ENCODE measurements at regions of chr6 and their contacts with region 1.

Region 1: DNA sequence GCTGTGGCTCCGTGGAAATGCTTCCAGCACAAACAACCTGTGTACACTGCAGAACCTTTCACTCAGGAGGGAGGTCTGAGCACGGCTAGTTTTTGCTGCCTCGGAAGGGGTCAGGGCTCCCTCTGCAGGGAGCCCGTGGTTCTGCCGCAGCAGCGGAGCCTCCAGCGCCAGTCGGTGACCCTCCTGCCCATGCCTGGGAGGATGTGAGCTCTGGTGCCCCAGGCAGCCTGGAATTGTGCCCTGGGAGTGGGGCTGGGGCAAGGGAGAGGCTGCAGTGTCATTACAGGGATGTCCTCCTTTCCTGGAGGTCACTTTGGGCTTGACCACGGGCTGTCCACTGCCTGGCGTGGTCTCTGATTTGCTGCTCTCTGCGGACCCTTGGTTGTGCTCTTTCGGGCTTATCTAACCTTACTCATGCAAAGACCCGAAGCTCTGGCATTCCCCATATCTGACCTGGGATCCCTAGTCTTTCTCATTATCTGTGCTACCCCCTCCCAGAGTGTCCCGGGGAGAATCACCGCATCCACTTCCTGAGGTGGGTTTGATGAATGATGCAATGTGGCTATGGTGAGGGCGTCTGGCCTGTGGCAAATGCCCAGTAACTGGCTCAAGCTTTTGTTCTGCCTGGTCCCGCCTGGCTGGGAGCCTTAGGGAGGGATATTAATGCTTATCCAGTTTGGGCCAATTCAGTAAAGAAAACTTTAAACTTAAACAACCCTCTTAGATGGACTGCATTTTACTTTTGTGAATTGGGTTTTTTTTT is 59.6 kb upstream of the TAGAP start:
- DNase-seq: peak in 3 of 4 donors; percentile 70 to 94 (median 71)
- ATAC-seq: peak; percentile 93
- H3K4me3 ChIP-seq: no peak overlapping the region
- H3K27ac ChIP-seq: no peak overlapping the region
- H3K4me1 ChIP-seq: peaks cover 3 to 42% of the 10 kb centered on the region in 2 donors
- H3K27me3 ChIP-seq: peaks cover 0 to 6% of the 10 kb centered on the region in 2 donors
- CTCF ChIP-seq: peak; percentile 90 to 96

Region 2: DNA sequence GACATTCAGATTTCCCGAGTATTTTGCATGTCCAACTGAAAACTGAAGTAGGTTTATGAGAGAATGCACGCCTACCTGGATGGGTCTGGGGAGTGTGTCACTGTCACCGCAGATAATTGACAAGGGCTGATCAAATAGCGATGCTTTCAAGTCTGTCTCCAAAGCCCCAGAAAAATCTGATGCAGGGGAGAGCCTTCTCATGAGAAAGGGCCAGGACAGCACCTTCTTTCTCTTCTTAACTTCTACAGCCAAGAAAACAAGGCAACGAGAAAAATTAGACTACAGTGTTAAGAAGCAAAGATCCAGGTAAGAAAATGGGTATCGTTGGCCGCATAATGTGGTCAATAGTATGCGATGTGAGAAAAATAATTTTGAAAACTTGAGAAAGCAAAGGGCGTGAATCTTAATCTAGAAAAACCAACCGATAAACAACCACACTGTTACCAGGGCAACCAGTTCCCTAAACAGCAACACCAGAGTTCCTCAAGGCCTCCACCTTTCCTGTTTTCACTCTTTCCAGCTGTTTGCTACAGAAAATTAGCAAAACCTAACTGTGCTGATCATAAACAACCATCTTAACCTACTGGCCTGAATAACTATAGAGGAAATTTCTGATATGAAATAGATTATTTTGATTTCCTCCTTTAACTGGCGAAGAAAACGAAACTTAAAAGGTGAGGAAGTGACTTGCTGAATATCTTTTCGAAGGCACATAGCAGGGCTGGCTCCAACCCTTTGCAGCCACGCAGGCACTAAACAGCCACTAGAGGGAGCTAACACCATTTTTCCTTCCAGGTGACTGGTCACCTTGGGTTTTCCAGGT is 62.1 kb before region 1 on chr6:
- intact Hi-C with region 1: loop called in 1 of 2 experiments (anchors 5 kb)
- DNase-seq: peak; percentile 43 to 76 (median 70)
- ATAC-seq: peak; percentile 87
- H3K4me3 ChIP-seq: peak overlapping the region; percentile 7 to 50
- H3K27ac ChIP-seq: peak overlapping the region; percentile 55 to 96
- H3K4me1 ChIP-seq: peaks cover 4 to 58% of the 10 kb centered on the region in 2 donors
- H3K27me3 ChIP-seq: no peaks in the 10 kb centered on the region
- CTCF ChIP-seq: peak; percentile 96 to 99